Endothelial cell of umbilical vein (primary cell): ENCODE measurements at regions of chr1 and their contacts with region 1.

Region 1: GRCh38 chr1:156838981-156839410 is 19.9 kb downstream of the INSRR start:
- DNase-seq: peak; percentile 30
- H3K4me3 ChIP-seq: no peak overlapping the region
- H3K27ac ChIP-seq: no peak overlapping the region
- H3K4me1 ChIP-seq: peaks cover 16% of the 10 kb centered on the region
- H3K27me3 ChIP-seq: peaks cover 30 to 41% of the 10 kb centered on the region in 2 experiments
- CTCF ChIP-seq: peak; percentile 82 to 88
- POLR2A ChIP-seq: no peak

Region 2: DNA sequence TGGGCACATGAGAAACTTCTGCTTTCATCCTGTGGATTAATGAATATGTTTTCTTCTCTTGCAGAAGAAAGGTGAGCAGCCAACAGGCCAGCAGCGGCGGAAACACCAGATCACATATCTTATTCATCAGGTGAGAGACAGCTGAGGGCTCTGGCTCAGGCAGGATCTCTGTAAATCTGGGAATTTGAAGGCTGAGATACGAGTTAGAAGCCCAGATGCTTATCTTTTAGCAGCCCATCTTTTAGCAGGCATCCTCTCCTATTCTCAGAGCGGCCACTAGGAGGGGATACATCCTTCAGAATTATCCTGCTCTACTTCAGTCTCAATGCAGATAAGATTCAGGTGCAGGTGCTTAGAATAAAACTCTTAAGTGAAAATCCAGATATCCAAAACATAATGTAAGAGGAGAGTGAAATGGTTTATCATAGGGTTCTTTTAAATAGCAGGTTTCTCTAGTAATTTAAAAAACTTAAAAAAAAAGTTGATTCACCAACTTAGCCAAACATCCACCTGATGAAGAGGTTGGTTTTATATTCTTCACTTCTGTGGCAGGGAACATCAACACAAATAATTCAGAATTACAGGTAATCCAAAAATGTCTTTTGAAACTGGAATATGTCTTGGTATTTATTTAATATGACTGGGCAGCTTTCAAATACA is 41.7 kb before region 1 on chr1:
- CTCF ChIA-PET with region 1: interaction called, 23 read pairs
- POLR2A ChIA-PET with region 1: no interaction called
- dilution Hi-C with region 1: no loop called
- intact Hi-C with region 1: no loop called
- DNase-seq: peak; percentile 75
- H3K4me3 ChIP-seq: no peak overlapping the region
- H3K27ac ChIP-seq: no peak overlapping the region
- H3K4me1 ChIP-seq: no peaks in the 10 kb centered on the region
- H3K27me3 ChIP-seq: no peaks in the 10 kb centered on the region
- CTCF ChIP-seq: peak; percentile 61 to 72
- POLR2A ChIP-seq: no peak

Region 3: GRCh38 chr1:156821801-156822200 is 17.2 kb before region 1 on chr1:
- CTCF ChIA-PET with region 1: interaction called, 46 read pairs
- POLR2A ChIA-PET with region 1: no interaction called
- dilution Hi-C with region 1: no loop called
- intact Hi-C with region 1: no loop called
- DNase-seq: no peak
- H3K4me3 ChIP-seq: no peak overlapping the region
- H3K27ac ChIP-seq: no peak overlapping the region
- H3K4me1 ChIP-seq: peaks cover 4% of the 10 kb centered on the region
- H3K27me3 ChIP-seq: peaks cover 15 to 22% of the 10 kb centered on the region in 2 experiments
- CTCF ChIP-seq: no peak
- POLR2A ChIP-seq: no peak

Region 4: GRCh38 chr1:156884560-156885184 is 45.7 kb after region 1 on chr1:
- CTCF ChIA-PET with region 1: interaction called, 43 read pairs
- POLR2A ChIA-PET with region 1: no interaction called
- dilution Hi-C with region 1: no loop called
- intact Hi-C with region 1: no loop called
- DNase-seq: no peak
- H3K4me3 ChIP-seq: no peak overlapping the region
- H3K27ac ChIP-seq: no peak overlapping the region
- H3K4me1 ChIP-seq: peaks cover 2% of the 10 kb centered on the region
- H3K27me3 ChIP-seq: peaks cover 5 to 22% of the 10 kb centered on the region in 2 experiments
- CTCF ChIP-seq: no peak
- POLR2A ChIP-seq: no peak